ENCODE measurements at regions of chr18 and their contacts with region 1.

Region 1: GRCh38 chr18:11851146-11851805 is at the start of gene CHMP1B:
- DNase-seq: peak; percentile 98
- ATAC-seq: peak; percentile 94
- H3K4me3 ChIP-seq: peak within 1 kb of the TSS; percentile 85 to 100 (median 98)
- H3K4me3 Mint-ChIP-seq: peak within 1 kb of the TSS; percentile 100
- H3K27ac ChIP-seq: peak within 1 kb of the TSS; percentile 93 to 97
- H3K27ac Mint-ChIP-seq: peak within 1 kb of the TSS; percentile 99
- H3K4me1 ChIP-seq: peaks cover 28 to 31% of the 10 kb centered on the region in 2 donors
- H3K4me1 Mint-ChIP-seq: peaks cover 34% of the 10 kb centered on the region
- H3K27me3 ChIP-seq: no peaks in the 10 kb centered on the region
- H3K27me3 Mint-ChIP-seq: no peaks in the 10 kb centered on the region
- CTCF ChIP-seq: no peak
- total RNA-seq, gene CHMP1B: 52.2 and 55.4 TPM in 2 replicates

Region 2: DNA sequence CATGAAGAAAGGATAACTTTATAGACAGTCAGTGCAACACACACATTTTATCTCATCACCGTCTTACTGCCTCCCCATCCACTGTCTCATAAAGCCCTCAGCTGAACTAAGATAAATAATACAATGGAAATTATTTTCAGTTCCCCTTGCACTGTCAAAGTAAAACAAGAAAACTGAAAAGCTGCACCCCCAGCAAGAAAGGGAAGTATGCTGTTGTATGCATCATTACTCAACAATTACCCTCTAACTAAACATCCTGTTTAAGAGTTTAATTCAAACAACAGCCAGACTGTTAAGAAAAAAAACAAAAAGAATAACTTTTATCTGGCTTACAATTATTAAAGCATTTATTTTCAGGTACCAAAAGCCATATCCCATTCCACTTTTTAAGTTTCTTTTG is 31.9 kb after region 1 on chr18:
- CTCF ChIA-PET with region 1: interaction called, 4 read pairs
- POLR2A ChIA-PET with region 1: interaction called, 4 read pairs
- intact Hi-C with region 1: loop called (anchors 1 kb)
- DNase-seq: peak; percentile 81
- ATAC-seq: peak; percentile 94
- H3K4me3 ChIP-seq: no peak overlapping the region
- H3K4me3 Mint-ChIP-seq: peak overlapping the region; percentile 52
- H3K27ac ChIP-seq: peak overlapping the region; percentile 41 to 61
- H3K27ac Mint-ChIP-seq: peak overlapping the region; percentile 75
- H3K4me1 ChIP-seq: peaks cover 35 to 44% of the 10 kb centered on the region in 2 donors
- H3K4me1 Mint-ChIP-seq: peaks cover 44% of the 10 kb centered on the region
- H3K27me3 ChIP-seq: no peaks in the 10 kb centered on the region
- H3K27me3 Mint-ChIP-seq: no peaks in the 10 kb centered on the region
- CTCF ChIP-seq: no peak

Region 3: DNA sequence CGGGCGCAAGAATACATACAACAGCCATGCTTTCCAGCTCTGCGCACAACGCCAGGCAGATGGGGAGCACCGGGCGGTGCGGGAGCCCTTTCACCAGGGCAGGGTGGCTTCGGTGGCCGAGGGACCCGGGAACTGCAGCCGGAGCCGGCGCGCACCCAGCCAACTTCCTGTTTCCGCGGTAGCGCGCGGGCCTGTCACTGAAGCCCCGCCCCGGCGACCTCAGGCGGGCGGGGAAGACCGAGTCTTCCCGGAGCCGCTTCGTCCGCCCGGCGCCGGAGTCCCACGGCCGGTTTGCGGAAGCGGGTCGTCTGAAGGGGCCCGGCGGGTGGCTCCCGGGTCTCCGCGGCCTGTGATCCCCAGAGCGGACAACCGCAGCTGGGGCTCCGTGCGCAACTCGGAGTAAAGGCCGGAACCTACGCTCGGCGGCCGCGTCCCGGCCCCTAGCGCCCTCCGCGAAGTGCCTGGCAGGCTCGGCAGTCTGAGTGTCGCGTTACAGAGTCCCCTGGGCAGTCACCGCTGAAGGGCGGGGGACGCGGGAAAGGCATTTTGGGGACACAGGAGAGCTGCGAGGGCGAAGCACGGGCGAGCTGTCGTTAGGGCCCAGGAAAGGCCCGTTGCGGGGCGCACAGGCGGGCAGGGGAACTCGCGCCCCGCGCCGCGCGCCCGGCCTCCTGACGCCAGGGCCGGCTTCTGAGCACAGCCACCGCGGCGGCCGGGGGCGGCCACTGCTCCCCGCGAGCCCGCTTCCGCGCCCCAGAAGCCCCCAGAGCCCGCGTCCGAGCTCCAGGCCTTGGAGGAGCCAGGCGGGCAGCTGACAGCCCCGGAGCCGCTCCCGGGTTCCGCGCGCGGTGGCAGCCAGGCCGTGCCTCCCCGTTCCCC is 57.1 kb after region 1 on chr18 and contains the start of gene MPPE1:
- CTCF ChIA-PET with region 1: no interaction called
- POLR2A ChIA-PET with region 1: no interaction called
- intact Hi-C with region 1: loop called (anchors 1 kb)
- DNase-seq: peak; percentile 94
- ATAC-seq: peak; percentile 92
- H3K4me3 ChIP-seq: peak within 1 kb of the TSS; percentile 75 to 96 (median 84)
- H3K4me3 Mint-ChIP-seq: peak within 1 kb of the TSS; percentile 93
- H3K27ac ChIP-seq: peak within 1 kb of the TSS; percentile 93 to 97
- H3K27ac Mint-ChIP-seq: peak within 1 kb of the TSS; percentile 94
- H3K4me1 ChIP-seq: peaks cover 13 to 18% of the 10 kb centered on the region in 2 donors
- H3K4me1 Mint-ChIP-seq: peaks cover 21% of the 10 kb centered on the region
- H3K27me3 ChIP-seq: no peaks in the 10 kb centered on the region
- H3K27me3 Mint-ChIP-seq: no peaks in the 10 kb centered on the region
- CTCF ChIP-seq: no peak
- total RNA-seq, gene MPPE1: 57.5 and 69.7 TPM in 2 replicates